Adrenal gland (tissue), 19 donors: ENCODE measurements at regions of chr17 and their contacts with region 1.

Region 1: DNA sequence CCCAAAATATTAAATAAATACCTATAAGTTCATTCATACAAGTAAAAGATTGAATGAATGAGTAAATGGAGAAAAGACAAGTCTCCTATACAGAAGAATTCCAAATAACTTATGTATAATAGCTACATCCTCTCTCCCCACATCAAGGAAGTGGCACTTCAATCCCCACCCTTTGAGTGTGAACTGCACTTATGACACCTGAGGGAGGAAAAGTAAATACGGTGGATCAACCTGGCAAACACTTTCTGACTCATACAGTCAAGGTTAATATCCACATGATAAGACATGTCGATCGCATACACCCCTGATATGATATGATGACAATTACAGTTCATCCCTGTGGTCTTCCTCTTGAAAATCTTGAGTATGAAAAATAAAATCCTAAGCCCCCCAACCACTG is 18.0 kb downstream of the SLFN12L start:
- DNase-seq: no peak
- H3K4me3 ChIP-seq: no peak overlapping the region
- H3K27ac ChIP-seq: no peak overlapping the region
- H3K4me1 ChIP-seq: no peaks in the 10 kb centered on the region
- H3K27me3 ChIP-seq: peaks cover 13% of the 10 kb centered on the region
- CTCF ChIP-seq: no peak
- POLR2A ChIP-seq: no peak

Region 2: DNA sequence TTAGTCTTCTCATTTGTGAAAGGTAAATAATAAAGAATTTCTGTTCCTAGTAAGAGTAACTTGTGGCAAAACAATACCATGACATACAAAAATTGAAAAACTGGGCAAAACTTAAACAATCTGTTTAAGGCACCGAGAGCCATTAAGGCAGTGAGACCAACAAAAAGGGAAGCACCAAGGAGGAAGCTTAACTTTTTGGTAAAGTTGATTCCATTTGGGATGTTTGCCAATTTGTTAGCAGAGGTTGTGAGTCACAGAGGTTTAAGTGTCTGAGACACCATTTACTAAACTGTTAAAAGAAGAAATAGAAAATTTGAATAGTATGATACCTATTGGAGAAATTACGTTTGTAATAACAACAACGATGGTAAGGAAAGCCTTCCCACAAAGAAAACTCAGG is 330.1 kb before region 1 on chr17:
- intact Hi-C with region 1: loop called in 1 of 2 experiments (anchors 10 kb)
- DNase-seq: no peak
- H3K4me3 ChIP-seq: no peak overlapping the region
- H3K27ac ChIP-seq: no peak overlapping the region
- H3K4me1 ChIP-seq: no peaks in the 10 kb centered on the region
- H3K27me3 ChIP-seq: no peaks in the 10 kb centered on the region
- CTCF ChIP-seq: no peak
- POLR2A ChIP-seq: no peak